CD4-positive, alpha-beta memory T cell (primary cell): ENCODE measurements at regions of chr12 and their contacts with region 1.

Region 1: GRCh38 chr12:59808317-59808910 is 212.6 kb downstream of the SLC16A7 start:
- DNase-seq: peak in 4 of 5 donors; percentile 22 to 38 (median 32)
- H3K4me3 ChIP-seq: no peak overlapping the region
- H3K4me3 Mint-ChIP-seq: no peak overlapping the region
- H3K27ac ChIP-seq: no peak overlapping the region
- H3K27ac Mint-ChIP-seq: no peak overlapping the region
- H3K4me1 ChIP-seq: no peaks in the 10 kb centered on the region
- H3K4me1 Mint-ChIP-seq: peaks cover 0 to 1% (median under 1%) of the 10 kb centered on the region in 4 donors
- H3K27me3 ChIP-seq: no peaks in the 10 kb centered on the region
- H3K27me3 Mint-ChIP-seq: peaks cover 2 to 4% of the 10 kb centered on the region in 2 donors

Region 2: GRCh38 chr12:59403259-59403932 is 405.0 kb before region 1 on chr12:
- CTCF ChIA-PET with region 1: interaction called, 25 read pairs
- POLR2A ChIA-PET with region 1: no interaction called
- intact Hi-C with region 1: loop called (anchors 1 kb)
- DNase-seq: peak in 4 of 5 donors; percentile 27 to 45 (median 37)
- H3K4me3 ChIP-seq: no peak overlapping the region
- H3K4me3 Mint-ChIP-seq: peak overlapping the region in 1 of 8 donors; percentile 47
- H3K27ac ChIP-seq: no peak overlapping the region
- H3K27ac Mint-ChIP-seq: no peak overlapping the region
- H3K4me1 ChIP-seq: no peaks in the 10 kb centered on the region
- H3K4me1 Mint-ChIP-seq: peaks cover 0 to 4% (median 3%) of the 10 kb centered on the region in 4 donors
- H3K27me3 ChIP-seq: no peaks in the 10 kb centered on the region
- H3K27me3 Mint-ChIP-seq: peaks cover 1% of the 10 kb centered on the region in 2 donors

Region 3: GRCh38 chr12:59431266-59431665 is 377.1 kb before region 1 on chr12:
- CTCF ChIA-PET with region 1: interaction called, 5 read pairs
- POLR2A ChIA-PET with region 1: no interaction called
- intact Hi-C with region 1: loop called (anchors 5 kb)
- DNase-seq: peak in 1 of 5 donors; percentile 5
- H3K4me3 ChIP-seq: no peak overlapping the region
- H3K4me3 Mint-ChIP-seq: no peak overlapping the region
- H3K27ac ChIP-seq: no peak overlapping the region
- H3K27ac Mint-ChIP-seq: no peak overlapping the region
- H3K4me1 ChIP-seq: no peaks in the 10 kb centered on the region
- H3K4me1 Mint-ChIP-seq: no peaks in the 10 kb centered on the region
- H3K27me3 ChIP-seq: no peaks in the 10 kb centered on the region
- H3K27me3 Mint-ChIP-seq: peaks cover 2% of the 10 kb centered on the region in 2 donors

Region 4: GRCh38 chr12:59444932-59445331 is 363.5 kb before region 1 on chr12:
- CTCF ChIA-PET with region 1: interaction called, 28 read pairs
- POLR2A ChIA-PET with region 1: no interaction called
- intact Hi-C with region 1: loop called (anchors 1 kb)
- DNase-seq: peak in 4 of 5 donors; percentile 7 to 24 (median 18)
- H3K4me3 ChIP-seq: no peak overlapping the region
- H3K4me3 Mint-ChIP-seq: no peak overlapping the region
- H3K27ac ChIP-seq: no peak overlapping the region
- H3K27ac Mint-ChIP-seq: no peak overlapping the region
- H3K4me1 ChIP-seq: no peaks in the 10 kb centered on the region
- H3K4me1 Mint-ChIP-seq: no peaks in the 10 kb centered on the region
- H3K27me3 ChIP-seq: no peaks in the 10 kb centered on the region
- H3K27me3 Mint-ChIP-seq: peaks cover 1 to 3% of the 10 kb centered on the region in 2 donors

Region 5: GRCh38 chr12:59999291-59999690 is 190.9 kb after region 1 on chr12:
- CTCF ChIA-PET with region 1: no interaction called
- POLR2A ChIA-PET with region 1: no interaction called
- intact Hi-C with region 1: no loop called
- DNase-seq: no peak
- H3K4me3 ChIP-seq: no peak overlapping the region
- H3K4me3 Mint-ChIP-seq: no peak overlapping the region
- H3K27ac ChIP-seq: no peak overlapping the region
- H3K27ac Mint-ChIP-seq: no peak overlapping the region
- H3K4me1 ChIP-seq: no peaks in the 10 kb centered on the region
- H3K4me1 Mint-ChIP-seq: no peaks in the 10 kb centered on the region
- H3K27me3 ChIP-seq: no peaks in the 10 kb centered on the region
- H3K27me3 Mint-ChIP-seq: no peaks in the 10 kb centered on the region